ENCODE measurements at regions of chr17 and their contacts with region 1.

Region 1: DNA sequence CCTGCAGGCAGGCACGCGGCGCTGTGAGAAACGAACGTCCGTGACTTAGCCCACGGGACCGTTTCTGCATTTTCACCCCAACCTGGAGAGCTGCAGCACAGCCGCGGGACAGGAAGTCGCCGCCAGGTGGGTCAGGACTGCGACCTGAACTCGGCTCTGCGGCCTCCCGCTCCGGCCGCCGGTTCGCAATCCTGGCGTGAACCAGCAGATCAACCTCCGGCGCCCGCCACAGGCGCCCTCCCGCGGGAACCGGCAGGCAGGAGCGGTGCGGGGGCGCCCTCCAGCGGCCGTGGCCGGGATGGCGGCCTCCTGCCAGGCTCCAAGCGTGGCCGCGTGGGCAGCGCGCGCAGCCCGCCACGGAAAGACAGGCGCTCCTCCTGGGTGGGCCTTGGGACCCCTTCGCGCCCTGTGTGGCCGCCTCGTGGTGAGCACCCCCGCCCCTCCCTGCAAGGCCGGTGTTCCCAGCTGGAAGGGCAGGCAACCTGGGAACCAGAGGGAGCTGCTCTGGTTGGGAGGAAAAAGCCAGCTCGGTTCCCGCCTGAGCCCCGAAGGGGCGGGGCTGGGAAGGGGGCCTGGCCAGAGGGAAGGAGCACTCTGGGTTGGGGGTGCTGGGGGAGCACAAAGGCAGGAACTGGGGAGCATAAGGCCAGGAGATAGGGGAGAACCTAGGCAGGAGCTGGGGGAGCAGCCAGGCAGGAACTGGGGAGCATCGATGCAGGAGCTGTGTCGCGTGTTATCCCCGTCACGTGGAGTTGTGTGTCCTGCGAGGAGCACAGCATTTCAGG is 28.2 kb downstream of the ACTG1 start:
- DNase-seq: peak; percentile 93
- H3K4me3 Mint-ChIP-seq: peak overlapping the region; percentile 39
- H3K27ac Mint-ChIP-seq: no peak overlapping the region
- H3K4me1 Mint-ChIP-seq: no peaks in the 10 kb centered on the region
- H3K27me3 Mint-ChIP-seq: peaks cover 24% of the 10 kb centered on the region
- CTCF ChIP-seq: peak; percentile 98

Region 2: DNA sequence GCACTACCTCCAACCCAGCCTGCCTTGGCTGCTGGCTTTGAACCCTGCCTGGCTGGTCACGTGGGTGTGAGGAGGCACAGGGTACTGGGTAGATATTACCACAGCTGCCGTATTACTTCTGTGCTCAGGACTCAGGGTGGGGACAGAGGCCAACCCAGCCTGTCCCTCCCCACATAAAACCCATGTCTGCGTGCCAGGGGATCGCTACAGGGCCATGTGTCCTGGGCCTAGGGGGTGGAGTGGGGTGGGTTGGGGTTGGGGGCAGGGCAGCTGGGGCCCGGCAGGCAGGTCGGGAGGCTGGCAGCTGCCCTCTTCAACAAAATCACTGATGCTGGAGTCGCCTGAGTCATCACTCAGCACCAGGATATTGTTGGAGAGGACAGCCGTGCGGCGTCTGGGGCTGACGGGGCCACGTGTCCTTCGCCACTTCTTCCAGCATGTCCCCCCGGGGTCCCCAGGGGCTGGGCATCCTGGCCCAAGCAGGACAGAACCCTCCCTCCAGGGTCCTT is 358.8 kb before region 1 on chr17:
- CTCF ChIA-PET with region 1: no interaction called
- intact Hi-C with region 1: no loop called
- DNase-seq: no peak
- H3K4me3 Mint-ChIP-seq: no peak overlapping the region
- H3K27ac Mint-ChIP-seq: no peak overlapping the region
- H3K4me1 Mint-ChIP-seq: no peaks in the 10 kb centered on the region
- H3K27me3 Mint-ChIP-seq: no peaks in the 10 kb centered on the region
- CTCF ChIP-seq: no peak

Region 3: GRCh38 chr17:81253358-81254131 is 230.8 kb before region 1 on chr17:
- CTCF ChIA-PET with region 1: interaction called, 4 read pairs
- intact Hi-C with region 1: loop called (anchors 5 kb)
- DNase-seq: peak; percentile 55
- H3K4me3 Mint-ChIP-seq: no peak overlapping the region
- H3K27ac Mint-ChIP-seq: peak overlapping the region; percentile 33
- H3K4me1 Mint-ChIP-seq: no peaks in the 10 kb centered on the region
- H3K27me3 Mint-ChIP-seq: no peaks in the 10 kb centered on the region
- CTCF ChIP-seq: peak; percentile 85

Region 4: DNA sequence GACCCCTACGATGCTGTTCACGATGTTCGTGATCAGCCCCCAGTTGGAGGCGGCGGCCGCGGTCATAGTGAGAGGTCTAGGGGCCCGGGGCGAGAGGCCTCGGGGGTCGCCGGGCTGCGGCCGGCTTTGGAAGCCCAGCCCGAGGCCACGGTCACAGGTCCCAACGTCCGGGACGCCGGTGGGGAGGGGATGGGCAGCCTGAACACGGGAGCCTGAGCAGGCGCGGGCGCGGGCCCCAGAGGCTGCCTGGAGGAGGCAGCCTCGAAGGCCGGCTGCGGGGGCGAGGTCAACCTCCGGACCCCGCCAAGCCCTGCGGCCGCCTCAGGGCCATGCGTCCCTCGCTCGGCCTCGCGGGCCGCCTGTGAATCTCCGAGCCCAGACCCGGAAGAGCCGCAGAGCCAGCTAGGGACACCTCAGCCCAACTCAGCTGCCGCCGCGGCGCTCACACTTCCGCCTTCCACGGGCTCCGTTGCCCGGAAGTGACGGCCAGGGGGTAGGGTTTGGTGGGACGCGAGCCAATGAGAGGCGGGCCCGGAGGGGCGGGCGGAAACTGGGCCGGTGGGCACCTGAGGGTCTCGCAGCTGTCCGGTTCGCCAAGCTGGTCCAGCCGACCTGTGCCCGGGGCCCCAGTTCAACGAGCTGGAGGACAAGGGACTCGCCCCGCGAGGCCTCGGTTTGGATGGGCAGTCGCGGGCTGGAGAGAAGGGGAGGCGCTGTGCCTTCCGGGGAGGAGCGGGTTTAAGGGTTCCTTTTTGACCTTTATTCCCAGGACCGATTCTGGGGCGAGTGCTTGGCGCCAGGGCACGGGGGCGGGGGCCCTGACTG is 189.3 kb before region 1 on chr17 and contains the start of gene SLC38A10:
- CTCF ChIA-PET with region 1: interaction called, 9 read pairs
- intact Hi-C with region 1: loop called (anchors 10 kb)
- DNase-seq: peak; percentile 93
- H3K4me3 Mint-ChIP-seq: peak within 1 kb of the TSS; percentile 98
- H3K27ac Mint-ChIP-seq: peak within 1 kb of the TSS; percentile 91
- H3K4me1 Mint-ChIP-seq: peaks cover 8% of the 10 kb centered on the region
- H3K27me3 Mint-ChIP-seq: peaks cover 3% of the 10 kb centered on the region
- CTCF ChIP-seq: no peak
- total RNA-seq, gene SLC38A10: 120 and 121 TPM in 2 replicates

Region 5: GRCh38 chr17:81309070-81309905 is 175.1 kb before region 1 on chr17:
- CTCF ChIA-PET with region 1: interaction called, 13 read pairs
- intact Hi-C with region 1: no loop called
- DNase-seq: peak; percentile 86
- H3K4me3 Mint-ChIP-seq: peak overlapping the region; percentile 58
- H3K27ac Mint-ChIP-seq: peak overlapping the region; percentile 64
- H3K4me1 Mint-ChIP-seq: peaks cover 18% of the 10 kb centered on the region
- H3K27me3 Mint-ChIP-seq: peaks cover 22% of the 10 kb centered on the region
- CTCF ChIP-seq: peak; percentile 43

Region 6: DNA sequence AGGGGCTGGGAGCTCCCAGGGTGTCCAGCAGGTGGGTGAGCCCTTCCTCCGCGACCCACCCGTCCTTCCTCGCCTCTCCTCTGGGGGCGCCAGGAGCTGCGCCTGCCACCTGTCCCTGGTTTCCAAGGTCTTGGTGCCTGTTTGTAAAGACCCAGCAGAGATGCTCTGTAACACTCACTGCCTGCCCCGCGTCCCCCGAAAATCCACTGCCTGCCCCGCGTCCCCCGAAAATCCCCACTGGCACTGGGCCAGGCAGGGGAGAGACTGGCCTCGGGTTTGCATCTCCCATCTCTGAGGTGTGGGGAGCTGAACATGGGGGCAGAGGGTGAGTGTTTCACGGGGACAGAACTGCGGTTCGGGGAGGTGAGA is 43.5 kb before region 1 on chr17:
- CTCF ChIA-PET with region 1: interaction called, 10 read pairs
- intact Hi-C with region 1: no loop called
- DNase-seq: peak; percentile 76
- H3K4me3 Mint-ChIP-seq: no peak overlapping the region
- H3K27ac Mint-ChIP-seq: no peak overlapping the region
- H3K4me1 Mint-ChIP-seq: no peaks in the 10 kb centered on the region
- H3K27me3 Mint-ChIP-seq: peaks cover 30% of the 10 kb centered on the region
- CTCF ChIP-seq: peak; percentile 85

Region 7: DNA sequence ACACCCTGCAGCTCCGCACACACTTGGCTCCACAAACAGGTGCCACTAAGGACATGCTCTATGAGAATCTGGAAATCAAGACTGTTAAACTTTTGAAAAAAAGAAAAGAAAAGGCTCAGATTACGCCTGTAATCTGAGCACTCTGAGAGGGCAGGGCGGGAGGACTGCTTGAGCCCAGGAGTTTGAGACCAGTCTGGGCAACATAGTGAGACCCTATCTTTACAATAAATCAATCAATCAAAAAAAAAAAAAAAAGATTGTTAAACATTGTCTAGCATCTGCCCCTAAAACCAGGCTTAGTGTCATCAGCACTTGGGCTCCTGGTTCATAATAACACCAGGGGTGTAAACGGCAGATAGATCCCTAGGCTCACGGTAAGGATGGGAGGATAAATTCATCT is 105.2 kb after region 1 on chr17:
- CTCF ChIA-PET with region 1: no interaction called
- intact Hi-C with region 1: no loop called
- DNase-seq: no peak
- H3K4me3 Mint-ChIP-seq: no peak overlapping the region
- H3K27ac Mint-ChIP-seq: no peak overlapping the region
- H3K4me1 Mint-ChIP-seq: no peaks in the 10 kb centered on the region
- H3K27me3 Mint-ChIP-seq: no peaks in the 10 kb centered on the region
- CTCF ChIP-seq: no peak

Region 8: DNA sequence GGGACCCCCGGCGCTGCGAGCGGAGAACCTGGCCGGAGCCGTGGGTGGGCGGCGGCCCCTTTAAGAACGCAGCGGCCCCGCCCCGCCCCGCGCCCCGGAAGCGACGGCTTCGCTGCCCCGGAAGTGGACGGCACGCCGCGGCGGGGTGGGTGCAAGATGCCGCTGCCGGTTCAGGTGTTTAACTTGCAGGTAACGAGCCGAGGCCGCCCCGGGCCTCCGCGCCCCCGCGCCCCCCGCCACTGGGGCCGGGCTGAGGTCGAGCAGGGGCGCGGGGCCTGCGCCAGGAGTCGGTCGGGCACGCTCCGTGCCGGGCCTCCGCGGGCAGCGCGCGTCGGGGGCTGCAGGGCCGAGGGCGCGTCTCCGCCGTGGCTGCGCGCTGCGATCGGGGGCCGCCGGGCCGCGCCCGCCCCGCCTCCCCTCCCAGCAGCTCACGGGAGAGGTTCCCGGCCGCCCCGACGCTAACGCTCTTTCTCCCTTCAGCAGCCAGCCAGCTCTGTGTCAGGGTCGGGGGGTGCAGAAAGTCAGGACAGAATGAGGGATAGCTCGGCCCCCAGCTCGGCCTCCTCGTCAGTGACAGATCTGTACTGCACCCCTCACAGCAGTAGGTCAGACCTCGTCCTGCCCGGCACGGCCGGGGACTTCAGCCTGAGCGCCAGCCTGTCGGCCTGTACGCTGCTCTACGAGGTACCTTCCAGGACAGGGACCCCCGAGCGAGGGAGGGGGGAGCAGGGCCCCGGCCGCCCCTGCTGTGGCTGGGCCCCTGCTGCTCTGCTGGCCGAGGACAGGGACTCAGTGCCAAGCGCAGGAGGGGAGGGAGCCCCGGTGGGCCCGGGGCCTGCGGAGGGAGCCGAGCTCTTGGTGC is 567.6 kb after region 1 on chr17 and contains the starts of genes GPS1 and RFNG:
- CTCF ChIA-PET with region 1: no interaction called
- intact Hi-C with region 1: no loop called
- DNase-seq: peak; percentile 84
- H3K4me3 Mint-ChIP-seq: peak within 1 kb of the TSS; percentile 80
- H3K27ac Mint-ChIP-seq: peak within 1 kb of the TSS; percentile 60
- H3K4me1 Mint-ChIP-seq: no peaks in the 10 kb centered on the region
- H3K27me3 Mint-ChIP-seq: no peaks in the 10 kb centered on the region
- CTCF ChIP-seq: no peak
- total RNA-seq, gene GPS1: 114 and 115 TPM in 2 replicates
- total RNA-seq, gene RFNG: 26.4 and 33.5 TPM in 2 replicates